ENCODE measurements at regions of chr4 and their contacts with region 1.

Region 1: GRCh38 chr4:11505221-11505971 is 76.7 kb upstream of the HS3ST1 start:
- DNase-seq: no peak

Region 2: DNA sequence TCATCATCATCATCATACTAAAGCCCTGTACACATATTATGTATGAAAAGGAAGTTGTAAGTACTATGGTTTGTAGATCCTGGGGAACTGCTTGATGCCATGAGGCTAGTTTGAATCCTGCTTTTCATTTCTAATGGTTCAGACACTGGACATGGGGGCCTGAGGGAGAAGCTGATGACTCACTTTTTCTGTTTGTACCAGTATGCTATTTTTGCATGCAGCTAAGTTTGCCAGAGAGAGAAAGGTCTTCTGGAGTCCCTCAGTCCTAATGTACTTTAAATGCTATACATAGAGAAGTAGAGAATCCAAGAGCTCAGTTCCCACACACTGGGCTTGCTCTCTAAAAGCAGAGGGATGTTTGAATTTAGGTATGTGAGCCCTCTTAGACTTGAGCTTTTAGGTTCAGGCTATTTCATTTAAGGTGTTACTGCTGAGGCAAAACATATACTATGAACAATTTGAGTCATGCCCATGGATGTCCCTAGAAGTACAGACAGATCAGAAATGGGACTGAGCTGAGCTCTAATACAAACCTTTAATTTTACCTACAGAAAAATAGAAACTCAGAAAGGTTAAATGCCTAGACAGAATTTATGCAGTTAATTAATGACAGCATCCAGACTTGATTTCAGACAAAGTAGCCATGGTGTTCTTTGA is 59.1 kb before region 1 on chr4:
- intact Hi-C with region 1: no loop called
- DNase-seq: no peak

Region 3: GRCh38 chr4:11548597-11549082 is 43.2 kb after region 1 on chr4:
- intact Hi-C with region 1: no loop called
- DNase-seq: no peak

Region 4: DNA sequence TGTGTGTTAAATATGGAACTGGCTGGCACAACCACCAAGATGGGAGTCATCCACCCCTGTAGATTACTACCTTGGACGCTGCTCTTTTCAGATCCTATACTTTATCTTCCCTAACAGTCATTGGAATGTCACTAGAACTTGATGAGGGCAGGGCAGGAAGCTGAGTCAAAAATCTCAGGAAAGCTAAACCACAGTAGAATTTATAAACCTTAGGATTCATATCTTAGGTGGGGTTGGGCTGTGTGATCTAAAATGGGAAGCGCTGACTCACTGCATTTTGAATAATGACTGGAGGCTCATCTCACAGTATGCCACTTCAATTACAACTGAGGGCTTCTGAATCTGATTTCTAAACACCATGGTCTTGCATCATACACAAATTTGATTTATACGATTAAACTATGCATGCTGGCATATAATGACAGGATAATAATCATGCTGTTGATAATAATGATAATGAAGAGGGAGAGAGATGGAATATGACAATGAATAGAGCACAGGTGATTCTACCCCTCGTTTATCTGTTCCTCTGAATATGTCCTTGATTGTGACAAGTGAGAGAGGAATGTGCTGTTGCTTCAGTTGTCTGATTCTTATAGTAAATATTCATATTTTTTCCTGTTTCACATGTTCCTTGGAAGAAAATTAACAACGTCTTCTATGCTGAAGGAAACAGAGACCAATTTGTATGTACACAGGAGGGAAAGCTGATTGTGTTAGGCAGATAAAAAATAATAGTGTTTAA is 193.6 kb after region 1 on chr4:
- intact Hi-C with region 1: loop called (anchors 10 kb)
- DNase-seq: no peak

Region 5: DNA sequence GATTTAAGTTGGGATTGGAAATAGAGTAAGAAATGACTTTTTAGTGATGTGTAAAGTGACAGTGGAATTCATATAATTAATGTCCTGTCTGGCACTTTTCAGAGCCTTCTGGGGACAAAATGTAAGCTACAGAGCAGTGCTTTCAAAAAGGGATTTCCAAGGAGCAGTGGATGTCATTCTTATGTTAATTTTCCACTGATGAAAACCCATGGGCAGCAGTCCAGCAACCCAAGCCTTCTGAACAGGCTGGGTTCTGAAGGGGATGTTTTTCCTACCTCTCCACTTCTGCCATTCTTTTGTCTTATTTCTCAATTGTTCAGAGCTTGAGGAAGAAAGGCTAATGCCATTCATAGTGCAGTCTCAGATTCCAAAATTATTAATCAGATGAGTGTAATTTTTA is 640.9 kb after region 1 on chr4:
- intact Hi-C with region 1: no loop called
- DNase-seq: no peak

Measured in cardiac septum (tissue), 1 donor.